HepG2 (cell line): ENCODE measurements at regions of chr17 and their contacts with region 1.

Region 1: DNA sequence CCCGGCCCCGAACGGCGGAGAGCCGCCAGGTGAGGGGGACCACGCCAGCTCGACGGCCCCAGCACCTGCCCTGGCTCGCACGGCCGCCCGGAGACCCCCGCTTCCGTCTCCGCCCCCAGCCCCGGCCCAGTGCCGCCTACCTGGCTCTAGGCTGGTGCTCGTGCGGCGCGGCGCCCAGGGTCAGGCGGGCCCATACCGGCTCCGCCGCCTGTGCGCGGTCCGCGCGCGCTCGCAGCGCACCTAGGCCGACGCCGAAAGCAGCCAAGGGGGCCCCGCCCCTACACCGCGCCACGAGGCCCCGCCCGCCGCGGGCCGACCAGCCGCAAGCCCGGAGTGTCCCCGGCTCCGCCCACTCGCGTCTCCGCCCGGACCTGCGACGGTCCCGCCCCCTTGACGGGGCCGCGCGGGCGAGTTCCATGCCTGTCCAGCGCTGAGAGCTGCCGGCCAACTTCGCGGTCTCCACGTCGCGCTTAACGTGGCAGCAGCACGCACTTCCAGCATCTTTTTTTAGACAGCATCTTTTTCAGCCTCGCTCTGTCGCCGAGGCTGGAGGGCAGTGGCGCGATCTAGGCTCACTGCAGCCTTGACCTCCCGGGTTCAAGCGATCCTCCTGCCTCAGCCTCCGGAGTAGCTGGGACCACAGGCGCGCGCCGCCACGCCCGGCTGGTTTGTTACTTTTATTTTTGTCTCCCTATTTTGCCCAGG is at the start of gene SLC25A39:
- DNase-seq: peak; percentile 85
- ATAC-seq: peak; percentile 80
- H3K4me3 ChIP-seq: peak within 1 kb of the TSS; percentile 78 to 97 (median 91)
- H3K27ac ChIP-seq: peak within 1 kb of the TSS; percentile 61
- H3K4me1 ChIP-seq: peaks cover 55% of the 10 kb centered on the region
- H3K27me3 ChIP-seq: no peaks in the 10 kb centered on the region; a peak in 3 of 5 replicates
- CTCF ChIP-seq: peak; percentile 22; the same call in 1 of the 2 replicates
- EP300 ChIP-seq: peak in 1 of 2 experiments; percentile 31; a peak in 2 of 4 replicates
- POLR2A ChIP-seq: peak; percentile 72 to 91
- RAD21 ChIP-seq: peak; percentile 71
- total RNA-seq, gene SLC25A39: 119 and 151 TPM in 2 replicates

Region 2: DNA sequence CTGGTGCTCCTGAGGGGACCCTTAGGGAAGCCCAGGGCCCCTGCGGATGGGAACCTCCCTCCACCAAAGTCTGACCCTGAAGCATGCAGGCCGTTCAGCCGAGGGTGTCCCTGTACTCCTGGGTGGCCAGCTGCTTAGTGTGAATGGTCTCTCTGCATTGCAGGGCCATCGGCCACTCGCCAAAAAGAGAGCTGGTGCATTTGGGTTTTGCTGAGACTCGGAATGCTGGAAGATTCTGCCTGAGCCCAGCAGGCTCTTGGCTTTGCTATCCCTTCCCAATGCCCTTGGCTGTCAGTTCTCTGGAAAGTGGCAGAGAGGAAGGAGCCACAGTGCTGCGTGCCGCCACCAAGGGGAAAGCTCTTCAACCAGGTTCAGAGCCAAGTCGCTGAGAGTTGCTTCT is 665.8 kb before region 1 on chr17:
- CTCF ChIA-PET with region 1: no interaction called
- POLR2A ChIA-PET with region 1: no interaction called
- in situ Hi-C with region 1: no loop called
- intact Hi-C with region 1: no loop called
- DNase-seq: no peak
- ATAC-seq: peak; percentile 20; the same call in 1 of the 3 replicates
- H3K4me3 ChIP-seq: no peak overlapping the region; a peak in 1 of 6 replicates
- H3K27ac ChIP-seq: no peak overlapping the region
- H3K4me1 ChIP-seq: peaks cover 16% of the 10 kb centered on the region
- H3K27me3 ChIP-seq: peaks cover 13 to 43% of the 10 kb centered on the region in 2 experiments; a peak in 4 of 5 replicates
- CTCF ChIP-seq: no peak
- EP300 ChIP-seq: no peak
- POLR2A ChIP-seq: no peak
- RAD21 ChIP-seq: no peak

Region 3: DNA sequence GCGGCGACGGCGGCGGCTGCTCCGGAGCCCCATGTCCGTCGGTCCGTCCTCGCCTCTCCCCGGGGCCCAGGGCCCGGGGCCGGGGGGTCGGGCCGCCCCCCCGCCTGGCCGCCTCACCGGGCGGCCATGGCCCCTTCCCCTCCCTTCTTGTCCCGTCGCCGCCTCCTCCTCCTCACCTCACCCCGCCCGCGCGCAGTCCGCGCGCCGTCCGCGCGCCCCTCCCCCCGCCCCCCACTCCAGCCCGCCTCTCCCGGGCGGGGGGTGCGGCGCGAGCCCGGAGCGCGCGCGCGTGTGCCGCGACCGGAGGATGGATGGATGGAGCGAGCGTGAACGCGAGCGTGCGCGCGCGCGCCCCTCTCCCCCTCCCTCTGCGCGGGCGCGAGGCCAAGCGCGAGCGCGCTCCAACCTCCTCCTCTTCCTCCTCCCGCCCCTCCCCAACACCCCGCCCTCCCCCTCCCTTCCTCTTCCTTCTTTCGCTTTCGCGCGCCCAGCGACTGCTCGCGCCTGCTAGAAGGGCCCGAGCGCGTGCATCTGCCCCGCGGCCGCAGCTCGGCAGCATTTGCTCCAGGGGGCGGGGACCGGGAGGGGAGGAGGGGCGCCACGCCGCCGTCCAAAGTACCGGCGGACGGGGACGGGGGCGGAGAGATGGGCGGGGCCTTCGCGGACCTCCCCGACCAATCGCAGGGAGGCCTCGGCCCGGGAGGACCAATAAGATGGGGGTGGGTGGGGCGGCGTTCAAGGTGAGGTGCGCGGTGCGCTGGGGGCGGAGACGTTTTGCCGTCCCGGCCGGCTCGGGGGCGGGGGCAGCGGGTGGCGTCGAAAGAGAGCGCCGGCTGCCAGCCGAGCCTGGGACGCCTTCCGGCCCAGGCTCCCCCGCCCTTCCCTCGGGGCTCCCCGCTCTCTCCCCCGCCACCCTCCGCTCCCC is 124.9 kb before region 1 on chr17 and contains the start of gene ATXN7L3:
- CTCF ChIA-PET with region 1: no interaction called
- POLR2A ChIA-PET with region 1: interaction called, 5 read pairs
- in situ Hi-C with region 1: no loop called
- intact Hi-C with region 1: loop called (anchors 5 kb)
- DNase-seq: peak; percentile 97
- ATAC-seq: peak; percentile 82
- H3K4me3 ChIP-seq: peak within 1 kb of the TSS; percentile 91 to 94 (median 91)
- H3K27ac ChIP-seq: peak within 1 kb of the TSS; percentile 95
- H3K4me1 ChIP-seq: peaks cover 39% of the 10 kb centered on the region
- H3K27me3 ChIP-seq: no peaks in the 10 kb centered on the region; a peak in 1 of 5 replicates
- CTCF ChIP-seq: no peak
- EP300 ChIP-seq: no peak; a peak in 1 of 4 replicates
- POLR2A ChIP-seq: peak in 1 of 2 experiments; percentile 65; a peak in 2 of 4 replicates
- RAD21 ChIP-seq: peak; percentile 24; the same call in 1 of the 2 replicates
- total RNA-seq, gene ATXN7L3: 45.7 and 59.1 TPM in 2 replicates

Region 4: DNA sequence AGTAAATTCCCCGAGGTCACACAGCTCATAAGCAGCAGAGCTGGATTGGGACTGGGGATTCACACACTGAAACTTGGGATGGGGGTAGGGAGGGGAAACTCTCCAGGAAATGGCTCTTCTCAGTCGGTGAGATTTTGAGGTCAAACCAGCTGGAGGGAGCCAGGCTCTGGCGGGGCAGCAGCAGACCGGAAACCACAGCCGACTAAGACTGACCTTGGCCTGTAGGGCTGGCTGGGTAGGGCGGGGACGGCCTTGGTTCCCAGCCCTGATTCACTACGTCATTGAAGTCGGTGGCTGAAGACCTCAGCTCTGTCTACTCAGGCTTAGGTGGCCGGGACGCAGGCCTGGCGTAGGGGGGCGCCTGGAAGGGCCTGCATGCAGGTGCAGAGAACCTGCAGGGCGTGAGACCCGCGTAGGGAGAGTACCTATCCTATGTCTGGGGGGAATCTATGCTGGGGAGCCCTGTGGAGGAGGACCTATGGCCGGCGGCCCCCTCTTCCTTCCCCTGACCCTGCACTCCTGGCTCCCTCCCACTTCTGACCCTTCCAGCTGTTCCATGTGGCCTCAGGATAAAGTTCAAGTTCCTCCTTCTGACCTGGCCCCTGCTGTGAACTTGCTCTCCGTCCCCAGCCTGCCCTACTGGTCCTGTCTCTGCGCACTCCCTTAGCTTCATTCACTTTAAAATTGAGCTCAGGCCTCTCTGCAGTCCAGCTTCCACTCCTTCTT is 44.9 kb before region 1 on chr17:
- CTCF ChIA-PET with region 1: no interaction called
- POLR2A ChIA-PET with region 1: interaction called, 7 read pairs
- in situ Hi-C with region 1: no loop called
- intact Hi-C with region 1: loop called (anchors 10 kb)
- DNase-seq: peak; percentile 86
- ATAC-seq: peak; percentile 96
- H3K4me3 ChIP-seq: peak overlapping the region; percentile 8 to 69 (median 41); a peak in 4 of 6 replicates
- H3K27ac ChIP-seq: no peak overlapping the region
- H3K4me1 ChIP-seq: peaks cover 18% of the 10 kb centered on the region
- H3K27me3 ChIP-seq: peaks cover 0 to 28% of the 10 kb centered on the region in 2 experiments; a peak in 4 of 5 replicates
- CTCF ChIP-seq: peak; percentile 36; the same call in 1 of the 2 replicates
- EP300 ChIP-seq: peak in 1 of 2 experiments; percentile 24; a peak in 1 of 4 replicates
- POLR2A ChIP-seq: no peak
- RAD21 ChIP-seq: no peak

Region 5: DNA sequence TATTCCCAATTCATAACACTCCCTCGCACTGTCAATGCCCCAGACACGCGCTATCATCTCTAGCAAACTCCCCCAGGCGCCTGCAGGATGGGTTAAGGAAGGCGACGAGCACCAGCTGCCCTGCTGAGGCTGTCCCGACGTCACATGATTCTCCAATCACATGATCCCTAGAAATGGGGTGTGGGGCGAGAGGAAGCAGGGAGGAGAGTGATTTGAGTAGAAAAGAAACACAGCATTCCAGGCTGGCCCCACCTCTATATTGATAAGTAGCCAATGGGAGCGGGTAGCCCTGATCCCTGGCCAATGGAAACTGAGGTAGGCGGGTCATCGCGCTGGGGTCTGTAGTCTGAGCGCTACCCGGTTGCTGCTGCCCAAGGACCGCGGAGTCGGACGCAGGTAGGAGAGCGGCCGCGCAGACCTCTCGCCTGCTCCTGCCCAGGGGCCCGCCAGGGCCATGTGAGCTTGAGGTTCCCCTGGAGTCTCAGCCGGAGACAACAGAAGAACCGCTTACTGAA is 20.3 kb after region 1 on chr17 and contains the start of gene GRN:
- CTCF ChIA-PET with region 1: no interaction called
- POLR2A ChIA-PET with region 1: interaction called, 11 read pairs
- in situ Hi-C with region 1: no loop called
- intact Hi-C with region 1: loop called (anchors 2 kb)
- DNase-seq: peak; percentile 100
- ATAC-seq: peak; percentile 98
- H3K4me3 ChIP-seq: peak within 1 kb of the TSS; percentile 86 to 99 (median 95)
- H3K27ac ChIP-seq: peak within 1 kb of the TSS; percentile 68
- H3K4me1 ChIP-seq: peaks cover 25% of the 10 kb centered on the region
- H3K27me3 ChIP-seq: peaks cover 0 to 10% of the 10 kb centered on the region in 2 experiments; a peak in 1 of 5 replicates
- CTCF ChIP-seq: no peak
- EP300 ChIP-seq: peak in 1 of 2 experiments; percentile 63; a peak in 2 of 4 replicates
- POLR2A ChIP-seq: peak; percentile 92 to 97
- RAD21 ChIP-seq: no peak; the same call in 1 of the 2 replicates
- total RNA-seq, gene GRN: 41.2 and 86.6 TPM in 2 replicates